ENCODE measurements at regions of chr17 and their contacts with region 1.

Region 1: DNA sequence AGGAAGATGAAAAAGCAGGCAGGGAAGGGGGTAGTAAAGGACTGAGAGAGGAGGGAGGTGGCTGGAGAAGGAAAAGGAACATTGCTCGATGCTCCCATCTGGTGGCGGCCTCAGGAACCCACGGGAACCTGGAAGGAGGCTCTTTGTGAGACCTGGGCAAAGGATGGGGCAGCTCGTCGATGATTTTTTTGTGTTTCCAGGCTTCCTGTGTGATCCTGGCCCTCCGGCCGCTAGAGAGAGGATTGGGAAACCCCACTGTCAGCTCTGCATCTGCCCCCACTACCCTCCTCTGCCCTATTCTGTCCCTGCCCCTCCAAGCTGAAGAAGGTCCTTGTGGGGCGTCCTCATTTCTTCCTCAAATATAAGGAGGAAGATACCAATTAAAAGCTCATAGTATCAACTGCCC is 6.6 kb downstream of the WFIKKN2 start:
- DNase-seq: peak; percentile 74
- H3K4me3 Mint-ChIP-seq: no peak overlapping the region
- H3K27ac Mint-ChIP-seq: no peak overlapping the region
- H3K4me1 Mint-ChIP-seq: peaks cover 14% of the 10 kb centered on the region
- H3K27me3 Mint-ChIP-seq: no peaks in the 10 kb centered on the region
- CTCF ChIP-seq: peak; percentile 84

Region 2: DNA sequence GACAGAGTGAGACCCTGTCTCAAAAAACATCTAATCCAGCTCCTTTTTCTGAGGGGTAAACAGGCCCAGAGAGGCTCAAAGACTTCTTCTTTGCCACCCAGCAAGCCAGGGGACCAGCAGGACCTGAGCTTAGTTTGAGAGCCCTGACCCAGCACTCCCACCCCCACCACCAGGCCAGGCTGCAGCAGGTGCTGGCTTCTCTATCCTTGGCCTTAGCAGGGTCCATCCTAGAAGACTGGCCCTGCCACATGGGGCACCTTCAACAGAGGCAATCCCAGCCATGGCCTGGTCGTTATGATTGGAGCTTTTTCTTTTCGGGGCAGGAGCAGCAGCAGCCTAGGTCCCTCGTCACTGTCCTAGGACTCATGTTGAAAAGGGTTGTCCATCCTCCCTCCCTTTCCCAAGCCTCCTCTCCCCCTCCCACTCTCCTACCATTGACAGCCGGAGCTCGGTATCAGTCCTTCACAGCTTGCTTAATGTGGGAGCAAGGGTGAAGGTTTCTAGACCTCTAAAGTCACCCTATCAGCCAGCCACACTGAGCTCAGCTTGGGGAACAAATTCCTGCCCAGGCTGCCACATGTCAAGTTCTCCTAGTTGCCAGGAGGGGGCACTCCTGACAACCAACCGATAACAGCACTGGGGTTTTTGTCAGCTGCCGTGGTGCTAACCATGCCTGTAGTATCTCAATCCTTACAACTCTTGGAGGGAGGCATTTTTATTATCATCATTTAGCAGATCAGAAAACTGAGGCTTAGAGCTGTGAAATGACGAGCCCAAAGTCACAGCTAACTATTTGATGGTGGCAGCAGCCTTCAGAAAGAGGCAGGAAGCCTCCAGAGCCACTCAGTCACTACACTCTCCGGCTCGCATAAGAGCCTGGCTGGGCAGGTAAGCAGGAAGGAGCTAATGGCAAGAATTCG is 480.1 kb before region 1 on chr17:
- CTCF ChIA-PET with region 1: no interaction called
- POLR2A ChIA-PET with region 1: no interaction called
- intact Hi-C with region 1: no loop called
- DNase-seq: peak; percentile 74
- H3K4me3 Mint-ChIP-seq: no peak overlapping the region
- H3K27ac Mint-ChIP-seq: peak overlapping the region; percentile 67
- H3K4me1 Mint-ChIP-seq: peaks cover 7% of the 10 kb centered on the region
- H3K27me3 Mint-ChIP-seq: no peaks in the 10 kb centered on the region
- CTCF ChIP-seq: peak; percentile 62

Region 3: GRCh38 chr17:50547035-50547735 is 294.8 kb before region 1 on chr17 and contains the start of gene SPATA20:
- CTCF ChIA-PET with region 1: interaction called, 4 read pairs
- POLR2A ChIA-PET with region 1: no interaction called
- intact Hi-C with region 1: loop called (anchors 1 kb)
- DNase-seq: peak; percentile 89
- H3K4me3 Mint-ChIP-seq: peak within 1 kb of the TSS; percentile 79
- H3K27ac Mint-ChIP-seq: no peak within 1 kb of the TSS
- H3K4me1 Mint-ChIP-seq: peaks cover 17% of the 10 kb centered on the region
- H3K27me3 Mint-ChIP-seq: no peaks in the 10 kb centered on the region
- CTCF ChIP-seq: peak; percentile 99
- total RNA-seq, gene SPATA20: 35.3 and 39.4 TPM in 2 replicates

Region 4: DNA sequence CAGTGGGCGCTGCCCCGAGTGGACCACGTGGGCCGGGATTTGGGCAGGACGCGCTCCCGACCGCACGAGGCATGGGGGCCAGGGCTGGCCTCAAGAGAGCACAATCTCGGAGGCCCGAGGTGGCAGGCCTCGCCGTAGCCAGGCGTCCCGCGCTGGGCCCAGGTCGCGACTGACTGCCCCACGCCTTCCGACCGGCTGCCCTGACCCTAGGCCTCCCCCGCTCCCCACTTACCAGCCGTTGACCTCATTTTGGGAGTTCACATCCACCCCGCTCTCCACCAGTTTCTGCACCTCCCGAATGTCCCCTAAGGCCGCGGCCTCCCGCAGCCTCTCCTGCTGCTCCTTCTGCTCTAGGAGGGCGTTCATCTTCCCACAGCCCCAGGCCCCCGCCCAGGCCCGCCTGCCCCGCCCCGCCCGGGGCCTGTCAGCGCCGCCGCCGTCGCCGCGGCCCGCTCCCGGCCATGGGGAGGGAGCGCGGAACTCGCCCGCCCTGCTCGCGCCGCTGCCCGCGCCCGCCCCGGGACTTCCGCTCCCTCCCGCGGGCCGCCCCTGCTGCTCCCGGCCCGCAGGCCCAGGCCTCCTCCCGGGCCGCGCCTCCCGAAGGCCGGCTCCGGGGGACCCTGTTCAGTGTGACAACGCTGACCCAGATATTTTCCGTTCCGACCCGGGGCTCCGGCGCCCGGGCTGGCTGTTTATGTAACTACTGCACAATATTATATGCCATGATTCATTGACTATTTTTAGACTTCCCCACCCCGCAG is 134.5 kb before region 1 on chr17 and contains the start of gene ANKRD40:
- CTCF ChIA-PET with region 1: no interaction called
- POLR2A ChIA-PET with region 1: no interaction called
- intact Hi-C with region 1: loop called (anchors 5 kb)
- DNase-seq: peak; percentile 94
- H3K4me3 Mint-ChIP-seq: peak within 1 kb of the TSS; percentile 95
- H3K27ac Mint-ChIP-seq: peak within 1 kb of the TSS; percentile 76
- H3K4me1 Mint-ChIP-seq: peaks cover 25% of the 10 kb centered on the region
- H3K27me3 Mint-ChIP-seq: no peaks in the 10 kb centered on the region
- CTCF ChIP-seq: no peak
- total RNA-seq, gene ANKRD40: 42.2 and 46.4 TPM in 2 replicates

Region 5: GRCh38 chr17:50775926-50776325 is 66.0 kb before region 1 on chr17:
- CTCF ChIA-PET with region 1: interaction called, 320 read pairs
- POLR2A ChIA-PET with region 1: no interaction called
- intact Hi-C with region 1: no loop called
- DNase-seq: no peak
- H3K4me3 Mint-ChIP-seq: no peak overlapping the region
- H3K27ac Mint-ChIP-seq: no peak overlapping the region
- H3K4me1 Mint-ChIP-seq: no peaks in the 10 kb centered on the region
- H3K27me3 Mint-ChIP-seq: no peaks in the 10 kb centered on the region
- CTCF ChIP-seq: no peak

Region 6: GRCh38 chr17:50798424-50799288 is 43.3 kb before region 1 on chr17:
- CTCF ChIA-PET with region 1: interaction called, 23 read pairs
- POLR2A ChIA-PET with region 1: interaction called, 3 read pairs
- intact Hi-C with region 1: no loop called
- DNase-seq: peak; percentile 86
- H3K4me3 Mint-ChIP-seq: no peak overlapping the region
- H3K27ac Mint-ChIP-seq: peak overlapping the region; percentile 82
- H3K4me1 Mint-ChIP-seq: peaks cover 11% of the 10 kb centered on the region
- H3K27me3 Mint-ChIP-seq: no peaks in the 10 kb centered on the region
- CTCF ChIP-seq: no peak

Region 7: GRCh38 chr17:50949989-50950881 is 108.3 kb after region 1 on chr17:
- CTCF ChIA-PET with region 1: interaction called, 429 read pairs
- POLR2A ChIA-PET with region 1: interaction called, 3 read pairs
- intact Hi-C with region 1: no loop called
- DNase-seq: peak; percentile 92
- H3K4me3 Mint-ChIP-seq: peak overlapping the region; percentile 42
- H3K27ac Mint-ChIP-seq: peak overlapping the region; percentile 67
- H3K4me1 Mint-ChIP-seq: peaks cover 49% of the 10 kb centered on the region
- H3K27me3 Mint-ChIP-seq: no peaks in the 10 kb centered on the region
- CTCF ChIP-seq: peak; percentile 89

Measured in MCF 10A (cell line).